CD8-positive, alpha-beta T cell (primary cell): ENCODE measurements at regions of chr9 and their contacts with region 1.

Region 1: DNA sequence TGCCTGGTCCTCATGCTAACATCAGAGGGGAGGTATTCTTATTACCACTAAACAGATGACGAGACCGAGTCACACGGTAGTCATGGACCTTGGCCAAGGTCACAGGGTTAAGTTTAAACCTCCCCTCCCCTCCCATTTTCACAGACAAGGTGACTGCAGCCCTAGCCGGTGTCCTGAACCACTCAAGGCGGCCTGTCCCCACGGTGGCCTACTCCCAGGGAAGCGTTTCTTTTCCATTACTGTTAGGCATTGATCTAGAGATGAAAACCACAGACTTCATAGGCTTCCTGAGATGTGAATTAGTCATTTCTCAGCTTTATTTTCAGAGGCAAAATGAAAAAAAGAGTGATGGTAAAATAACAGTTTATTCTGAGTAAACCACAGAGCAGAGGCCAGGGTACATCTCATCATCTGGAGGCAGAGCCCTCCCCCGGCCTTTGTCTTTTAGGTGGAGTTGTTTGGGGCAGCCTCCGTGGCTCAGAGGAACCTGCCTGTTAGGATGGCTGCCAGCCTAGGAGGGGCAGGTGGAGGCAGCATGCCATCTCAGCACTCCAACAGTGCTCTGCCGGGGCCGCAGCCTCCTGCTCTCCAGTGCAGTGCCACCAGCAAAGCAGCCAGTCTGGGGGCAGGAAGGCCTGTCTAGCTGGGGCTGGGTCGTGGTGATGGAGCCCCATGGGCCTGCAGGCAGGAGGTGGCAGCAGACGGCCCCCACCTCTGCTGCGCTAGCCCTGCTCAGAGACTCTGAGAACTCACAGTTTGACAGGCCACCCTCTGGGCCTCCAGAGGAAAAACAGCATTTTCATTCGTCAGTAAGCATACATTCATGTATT is 71.2 kb downstream of the RAPGEF1 start:
- DNase-seq: peak; percentile 41 to 88 (median 73)
- ATAC-seq: peak; percentile 74
- H3K4me3 ChIP-seq: peak overlapping the region; percentile 23 to 29
- H3K4me3 Mint-ChIP-seq: peak overlapping the region; percentile 63
- H3K27ac ChIP-seq: peak overlapping the region; percentile 64 to 94
- H3K27ac Mint-ChIP-seq: peak overlapping the region; percentile 99
- H3K4me1 ChIP-seq: peaks cover 73% of the 10 kb centered on the region
- H3K4me1 Mint-ChIP-seq: peaks cover 83% of the 10 kb centered on the region
- H3K27me3 ChIP-seq: no peaks in the 10 kb centered on the region
- H3K27me3 Mint-ChIP-seq: no peaks in the 10 kb centered on the region
- CTCF ChIP-seq: no peak

Region 2: GRCh38 chr9:131635285-131635684 is 33.4 kb before region 1 on chr9:
- CTCF ChIA-PET with region 1: interaction called, 4 read pairs
- POLR2A ChIA-PET with region 1: no interaction called
- intact Hi-C with region 1: loop called in 1 of 2 experiments (anchors 2 kb)
- DNase-seq: peak; percentile 42 to 92 (median 76)
- ATAC-seq: peak; percentile 99
- H3K4me3 ChIP-seq: no peak overlapping the region
- H3K4me3 Mint-ChIP-seq: no peak overlapping the region
- H3K27ac ChIP-seq: peak overlapping the region in 1 of 2 experiments; percentile 74
- H3K27ac Mint-ChIP-seq: peak overlapping the region; percentile 89
- H3K4me1 ChIP-seq: peaks cover 16% of the 10 kb centered on the region
- H3K4me1 Mint-ChIP-seq: peaks cover 30% of the 10 kb centered on the region
- H3K27me3 ChIP-seq: no peaks in the 10 kb centered on the region
- H3K27me3 Mint-ChIP-seq: no peaks in the 10 kb centered on the region
- CTCF ChIP-seq: no peak

Region 3: DNA sequence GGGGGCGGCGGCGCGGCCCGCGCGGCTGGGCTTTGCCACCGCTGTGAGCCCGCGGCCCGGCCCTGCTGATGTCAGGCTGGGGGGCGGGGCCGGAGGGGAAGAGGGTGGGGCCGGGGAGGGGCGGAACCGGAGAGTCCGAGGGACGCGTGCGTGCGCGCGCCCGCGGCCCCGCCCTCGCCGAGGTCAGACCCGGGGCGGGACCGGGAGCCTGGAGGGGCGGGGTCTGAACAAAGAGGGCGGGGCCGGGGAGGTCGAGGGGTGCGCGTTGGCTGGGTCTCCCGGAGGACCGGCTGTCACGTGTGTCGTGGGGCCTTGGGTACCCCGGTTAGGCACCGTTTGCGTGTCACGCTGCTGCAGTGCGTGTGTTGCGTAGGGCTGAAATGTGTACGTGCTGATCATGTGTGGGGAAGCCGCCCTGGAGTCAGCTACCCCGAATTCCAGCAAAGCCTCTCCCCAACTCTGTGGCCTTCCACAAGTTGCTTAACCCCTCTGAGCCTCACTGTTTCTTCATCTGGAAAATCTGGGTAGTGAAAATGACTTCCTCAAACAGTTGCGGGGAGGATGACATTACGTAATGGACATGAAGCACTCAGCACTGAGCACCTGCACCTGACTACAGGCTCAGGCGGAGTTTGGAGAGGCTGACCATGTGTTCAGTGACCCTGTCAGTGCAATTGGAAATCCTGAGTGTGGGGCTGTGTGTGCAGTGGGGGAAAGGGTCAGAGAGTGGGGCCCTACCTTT is 1452.7 kb after region 1 on chr9 and contains the start of gene RALGDS:
- CTCF ChIA-PET with region 1: no interaction called
- POLR2A ChIA-PET with region 1: no interaction called
- intact Hi-C with region 1: loop called in 1 of 2 experiments (anchors 10 kb)
- DNase-seq: peak; percentile 84 to 95 (median 92)
- ATAC-seq: peak; percentile 83
- H3K4me3 ChIP-seq: peak within 1 kb of the TSS; percentile 41 to 53
- H3K4me3 Mint-ChIP-seq: peak within 1 kb of the TSS; percentile 84
- H3K27ac ChIP-seq: peak within 1 kb of the TSS; percentile 66 to 96
- H3K27ac Mint-ChIP-seq: peak within 1 kb of the TSS; percentile 98
- H3K4me1 ChIP-seq: peaks cover 63% of the 10 kb centered on the region
- H3K4me1 Mint-ChIP-seq: peaks cover 70% of the 10 kb centered on the region
- H3K27me3 ChIP-seq: no peaks in the 10 kb centered on the region
- H3K27me3 Mint-ChIP-seq: no peaks in the 10 kb centered on the region
- CTCF ChIP-seq: no peak
- total RNA-seq, gene RALGDS: 177 to 186 TPM